ENCODE measurements at regions of chr18 and their contacts with region 1.

Region 1: DNA sequence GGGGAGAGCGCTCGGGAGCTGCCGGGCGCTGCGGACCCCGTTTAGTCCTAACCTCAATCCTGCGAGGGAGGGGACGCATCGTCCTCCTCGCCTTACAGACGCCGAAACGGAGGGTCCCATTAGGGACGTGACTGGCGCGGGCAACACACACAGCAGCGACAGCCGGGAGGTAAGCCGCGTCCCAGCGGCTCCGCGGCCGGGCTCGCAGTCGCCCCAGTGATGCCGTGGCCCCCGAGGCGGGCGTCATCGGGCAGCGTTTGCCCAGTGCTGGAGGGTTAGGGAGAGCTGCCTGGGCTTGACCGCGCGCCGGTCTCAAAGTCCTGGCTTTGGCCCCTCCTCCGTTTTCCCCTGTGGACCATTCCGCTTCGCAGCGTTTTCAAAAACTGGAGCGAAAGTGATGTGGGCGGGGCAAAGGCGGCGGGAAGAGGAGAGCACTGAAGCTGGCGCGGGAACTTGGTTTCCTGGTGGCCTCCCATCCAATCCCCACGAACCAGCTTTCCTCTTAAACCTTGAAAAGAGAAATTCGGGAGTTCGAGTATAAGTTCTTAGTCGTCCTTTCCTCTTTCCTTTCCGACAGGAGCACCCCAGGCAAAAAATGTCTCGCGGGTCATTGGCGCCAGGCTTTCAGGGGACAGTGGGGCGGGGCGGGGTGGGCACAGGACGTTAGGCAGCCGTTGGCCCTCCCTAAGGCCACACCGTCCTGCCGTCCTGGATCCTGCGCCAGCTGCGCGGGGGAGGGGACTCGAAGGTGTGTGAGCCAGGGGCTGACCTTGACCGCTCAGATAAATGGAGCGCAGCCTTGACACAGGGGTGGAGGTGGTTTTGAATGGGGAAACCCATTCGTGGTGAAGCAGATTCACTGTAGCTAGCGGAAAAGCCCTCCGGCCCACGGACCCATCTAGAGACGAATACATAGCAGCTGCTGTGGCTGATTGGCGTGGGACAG is 821 bp downstream of the TYMS start:
- DNase-seq: peak; percentile 85
- ATAC-seq: peak; percentile 68
- H3K4me3 Mint-ChIP-seq: peak overlapping the region; percentile 94
- H3K27ac Mint-ChIP-seq: peak overlapping the region; percentile 94
- H3K4me1 Mint-ChIP-seq: peaks cover 20% of the 10 kb centered on the region
- H3K27me3 Mint-ChIP-seq: peaks cover 24% of the 10 kb centered on the region
- CTCF ChIP-seq: no peak

Region 2: DNA sequence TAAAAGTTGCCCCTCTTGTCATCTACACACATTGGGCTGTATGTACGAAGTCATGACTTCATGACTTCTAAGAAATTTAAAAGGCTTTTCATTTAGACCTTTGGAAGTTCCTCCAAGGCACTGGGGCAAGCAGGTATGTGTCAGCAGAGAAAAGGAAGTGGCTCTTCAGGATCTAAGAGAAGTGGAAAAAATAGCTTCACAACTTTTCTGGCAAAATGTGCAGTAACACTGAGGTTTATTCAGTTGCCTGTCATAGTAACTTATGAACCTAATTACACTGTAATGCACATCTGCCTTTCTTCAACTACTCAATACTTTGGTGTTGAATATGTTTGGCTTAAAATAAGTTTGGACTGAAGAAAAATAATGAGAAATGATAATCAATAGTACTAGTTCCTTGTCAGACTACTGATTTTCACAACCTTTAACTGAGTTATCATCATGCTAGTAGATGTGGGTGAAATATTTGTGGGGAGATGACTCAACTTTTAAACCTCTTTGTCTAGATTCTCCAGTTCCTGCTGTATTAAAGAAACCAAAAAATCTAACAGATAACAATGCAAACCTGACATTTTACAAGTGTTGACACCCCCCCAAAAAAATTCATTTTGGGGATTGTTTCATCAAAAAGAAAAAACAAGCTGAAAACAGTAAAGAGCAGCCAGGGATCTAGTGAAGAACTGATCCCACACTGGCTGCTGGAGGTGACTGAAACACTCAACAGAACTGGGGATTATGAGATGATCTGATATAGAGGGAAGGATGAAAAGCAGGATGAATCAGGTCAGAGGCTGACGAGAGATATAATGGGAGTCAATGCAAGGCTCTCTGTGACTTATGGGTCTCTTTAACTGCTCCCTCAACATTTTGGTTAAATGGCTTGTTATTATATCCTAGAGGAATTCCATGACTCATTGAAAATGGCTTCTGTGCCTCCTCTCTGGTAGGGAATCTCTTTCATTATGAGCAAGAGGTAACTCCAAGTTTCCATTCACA is 242.4 kb before region 1 on chr18:
- CTCF ChIA-PET with region 1: no interaction called
- POLR2A ChIA-PET with region 1: no interaction called
- intact Hi-C with region 1: no loop called
- DNase-seq: no peak
- ATAC-seq: no peak
- H3K4me3 Mint-ChIP-seq: no peak overlapping the region
- H3K27ac Mint-ChIP-seq: no peak overlapping the region
- H3K4me1 Mint-ChIP-seq: no peaks in the 10 kb centered on the region
- H3K27me3 Mint-ChIP-seq: peaks cover 9% of the 10 kb centered on the region
- CTCF ChIP-seq: no peak

Region 3: DNA sequence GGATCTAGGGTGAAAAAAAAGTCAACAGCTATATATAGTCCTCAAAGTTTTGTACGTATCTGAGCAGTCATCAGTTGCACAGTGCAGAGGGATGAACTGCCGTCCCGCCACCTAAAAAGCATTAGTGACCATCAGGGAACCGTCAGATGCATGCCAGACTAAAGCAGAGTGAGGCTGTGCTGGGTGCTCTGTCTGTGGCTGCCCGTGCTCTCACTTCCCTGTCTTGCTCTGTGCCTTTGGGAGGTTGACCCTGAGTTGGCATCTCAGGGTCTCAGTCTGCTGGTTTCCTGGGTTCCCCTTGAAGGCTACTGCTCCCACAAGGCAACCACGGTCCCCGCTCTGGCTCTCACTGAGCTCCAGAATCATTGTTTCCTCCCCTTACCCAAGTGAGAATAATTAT is 50.3 kb before region 1 on chr18:
- CTCF ChIA-PET with region 1: no interaction called
- POLR2A ChIA-PET with region 1: no interaction called
- intact Hi-C with region 1: no loop called
- DNase-seq: no peak
- ATAC-seq: no peak
- H3K4me3 Mint-ChIP-seq: no peak overlapping the region
- H3K27ac Mint-ChIP-seq: no peak overlapping the region
- H3K4me1 Mint-ChIP-seq: no peaks in the 10 kb centered on the region
- H3K27me3 Mint-ChIP-seq: no peaks in the 10 kb centered on the region
- CTCF ChIP-seq: no peak

Region 4: GRCh38 chr18:623761-624620 is 34.3 kb before region 1 on chr18:
- CTCF ChIA-PET with region 1: interaction called, 27 read pairs
- POLR2A ChIA-PET with region 1: interaction called, 6 read pairs
- intact Hi-C with region 1: no loop called
- DNase-seq: peak; percentile 85
- ATAC-seq: peak; percentile 95
- H3K4me3 Mint-ChIP-seq: no peak overlapping the region
- H3K27ac Mint-ChIP-seq: no peak overlapping the region
- H3K4me1 Mint-ChIP-seq: no peaks in the 10 kb centered on the region
- H3K27me3 Mint-ChIP-seq: peaks cover 2% of the 10 kb centered on the region
- CTCF ChIP-seq: peak; percentile 95

Region 5: DNA sequence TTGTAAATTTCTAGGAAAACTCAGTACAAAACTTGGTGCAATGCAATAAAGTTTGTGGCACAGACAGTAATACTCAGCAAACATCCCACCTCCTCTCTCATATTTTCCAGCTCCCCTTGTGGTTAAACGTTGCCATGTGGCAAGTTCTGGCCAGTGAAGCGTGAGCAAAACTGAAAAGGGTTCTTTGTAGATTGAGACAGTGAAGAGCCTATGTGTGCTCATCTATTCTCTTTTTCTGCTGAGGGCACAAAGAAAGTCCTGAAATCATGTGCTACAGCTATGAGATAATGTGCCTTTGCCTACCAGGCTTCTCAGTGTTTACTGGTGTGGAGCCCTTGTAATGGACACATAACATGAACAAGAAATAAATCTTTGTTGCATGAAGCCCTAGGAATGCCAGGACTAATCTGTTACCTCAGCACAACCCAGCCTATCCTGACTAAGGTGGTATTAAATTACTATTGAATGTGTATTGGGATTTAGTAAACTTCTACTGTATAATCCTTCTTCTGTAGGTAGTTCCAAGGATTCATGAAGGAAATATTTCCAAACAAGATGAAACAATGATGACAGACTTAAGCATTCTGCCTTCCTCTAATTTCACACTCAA is 13.8 kb before region 1 on chr18:
- CTCF ChIA-PET with region 1: interaction called, 3 read pairs
- POLR2A ChIA-PET with region 1: interaction called, 10 read pairs
- intact Hi-C with region 1: no loop called
- DNase-seq: peak; percentile 61
- ATAC-seq: peak; percentile 93
- H3K4me3 Mint-ChIP-seq: no peak overlapping the region
- H3K27ac Mint-ChIP-seq: no peak overlapping the region
- H3K4me1 Mint-ChIP-seq: peaks cover 7% of the 10 kb centered on the region
- H3K27me3 Mint-ChIP-seq: peaks cover 9% of the 10 kb centered on the region
- CTCF ChIP-seq: no peak

Region 6: DNA sequence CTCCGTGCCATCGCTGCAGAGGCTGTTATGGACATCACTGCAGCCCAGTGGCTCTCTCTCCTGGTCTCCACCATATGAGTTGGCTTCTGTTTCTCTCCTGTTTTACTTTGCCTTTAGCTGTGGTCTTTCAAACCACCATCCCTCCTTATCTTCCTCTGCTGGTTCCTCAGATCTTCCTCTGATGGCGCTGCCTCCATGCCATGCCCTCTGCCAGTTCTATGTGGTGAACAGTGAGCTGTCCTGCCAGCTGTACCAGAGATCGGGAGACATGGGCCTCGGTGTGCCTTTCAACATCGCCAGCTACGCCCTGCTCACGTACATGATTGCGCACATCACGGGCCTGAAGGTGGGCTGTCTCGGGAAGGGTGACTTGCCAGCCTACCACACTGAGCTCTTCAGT is 12.2 kb after region 1 on chr18:
- CTCF ChIA-PET with region 1: interaction called, 4 read pairs
- POLR2A ChIA-PET with region 1: interaction called, 41 read pairs
- intact Hi-C with region 1: no loop called
- DNase-seq: no peak
- ATAC-seq: no peak
- H3K4me3 Mint-ChIP-seq: no peak overlapping the region
- H3K27ac Mint-ChIP-seq: no peak overlapping the region
- H3K4me1 Mint-ChIP-seq: peaks cover 6% of the 10 kb centered on the region
- H3K27me3 Mint-ChIP-seq: no peaks in the 10 kb centered on the region
- CTCF ChIP-seq: no peak

Region 7: GRCh38 chr18:686339-687111 is 28.3 kb after region 1 on chr18:
- CTCF ChIA-PET with region 1: no interaction called
- POLR2A ChIA-PET with region 1: interaction called, 12 read pairs
- intact Hi-C with region 1: no loop called
- DNase-seq: no peak
- ATAC-seq: no peak
- H3K4me3 Mint-ChIP-seq: no peak overlapping the region
- H3K27ac Mint-ChIP-seq: no peak overlapping the region
- H3K4me1 Mint-ChIP-seq: peaks cover 18% of the 10 kb centered on the region
- H3K27me3 Mint-ChIP-seq: no peaks in the 10 kb centered on the region
- CTCF ChIP-seq: no peak

Region 8: DNA sequence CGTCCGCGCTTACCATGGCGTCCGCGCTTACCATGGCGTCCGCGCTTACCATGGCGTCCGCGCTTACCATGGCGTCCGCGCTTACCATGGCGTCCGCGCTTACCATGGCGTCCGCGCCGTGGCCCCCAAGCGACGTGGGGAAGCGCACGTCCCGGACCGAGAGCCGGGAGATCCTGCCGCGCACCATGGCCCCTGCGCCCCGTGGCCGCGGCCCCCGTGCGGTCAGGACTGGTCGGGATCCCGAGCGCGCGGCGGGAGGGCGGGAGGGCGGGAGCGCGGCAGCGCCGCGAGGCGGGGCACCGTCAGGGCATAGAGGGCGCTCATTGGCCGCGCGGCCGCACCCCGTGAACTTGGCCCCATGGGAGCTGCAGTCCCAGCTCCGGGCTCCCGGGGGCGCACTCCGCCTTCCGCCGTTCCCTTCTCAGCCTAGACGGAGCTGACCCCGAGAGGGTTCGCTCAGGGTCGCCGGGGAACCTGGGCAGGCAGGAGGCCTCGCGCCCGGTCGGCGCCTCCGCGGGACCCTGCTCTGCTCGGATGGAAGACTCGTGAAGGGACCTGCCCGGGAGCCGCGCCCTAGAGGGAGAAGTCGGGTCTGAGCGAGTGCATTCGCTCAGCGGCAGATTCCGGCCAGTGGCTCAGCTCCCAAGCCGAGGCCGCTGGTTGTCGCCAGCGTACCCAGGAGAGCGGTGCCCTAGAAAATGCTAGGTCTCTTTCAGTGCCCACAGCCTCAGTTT is 54.3 kb after region 1 on chr18 and contains the start of gene ENOSF1:
- CTCF ChIA-PET with region 1: interaction called, 7 read pairs
- POLR2A ChIA-PET with region 1: interaction called, 14 read pairs
- intact Hi-C with region 1: no loop called
- DNase-seq: peak; percentile 91
- ATAC-seq: peak; percentile 87
- H3K4me3 Mint-ChIP-seq: peak within 1 kb of the TSS; percentile 96
- H3K27ac Mint-ChIP-seq: peak within 1 kb of the TSS; percentile 97
- H3K4me1 Mint-ChIP-seq: peaks cover 64% of the 10 kb centered on the region
- H3K27me3 Mint-ChIP-seq: no peaks in the 10 kb centered on the region
- CTCF ChIP-seq: peak; percentile 87
- total RNA-seq, gene ENOSF1: 113 to 114 TPM

Region 9: GRCh38 chr18:778194-778927 is 120.1 kb after region 1 on chr18:
- CTCF ChIA-PET with region 1: no interaction called
- POLR2A ChIA-PET with region 1: no interaction called
- intact Hi-C with region 1: no loop called
- DNase-seq: no peak
- ATAC-seq: no peak
- H3K4me3 Mint-ChIP-seq: no peak overlapping the region
- H3K27ac Mint-ChIP-seq: no peak overlapping the region
- H3K4me1 Mint-ChIP-seq: peaks cover 36% of the 10 kb centered on the region
- H3K27me3 Mint-ChIP-seq: no peaks in the 10 kb centered on the region
- CTCF ChIP-seq: no peak

Region 10: GRCh38 chr18:1350931-1351450 is 692.7 kb after region 1 on chr18:
- CTCF ChIA-PET with region 1: no interaction called
- POLR2A ChIA-PET with region 1: no interaction called
- intact Hi-C with region 1: no loop called
- DNase-seq: no peak
- ATAC-seq: no peak
- H3K4me3 Mint-ChIP-seq: no peak overlapping the region
- H3K27ac Mint-ChIP-seq: no peak overlapping the region
- H3K4me1 Mint-ChIP-seq: no peaks in the 10 kb centered on the region
- H3K27me3 Mint-ChIP-seq: no peaks in the 10 kb centered on the region
- CTCF ChIP-seq: no peak